SK-N-SH (cell line): ENCODE measurements at regions of chr6 and their contacts with region 1.

Region 1: GRCh38 chr6:151765444-151765886 is 42.0 kb upstream of the ESR1 start:
- DNase-seq: peak; percentile 61
- H3K4me3 ChIP-seq: peak overlapping the region in 1 of 2 experiments; percentile 14; a peak in 1 of 4 replicates
- H3K27ac ChIP-seq: no peak overlapping the region
- H3K4me1 ChIP-seq: no peaks in the 10 kb centered on the region; a peak in 2 of 4 replicates
- H3K27me3 ChIP-seq: no peaks in the 10 kb centered on the region
- CTCF ChIP-seq: peak; percentile 76
- EP300 ChIP-seq: no peak
- RAD21 ChIP-seq: peak; percentile 73

Region 2: DNA sequence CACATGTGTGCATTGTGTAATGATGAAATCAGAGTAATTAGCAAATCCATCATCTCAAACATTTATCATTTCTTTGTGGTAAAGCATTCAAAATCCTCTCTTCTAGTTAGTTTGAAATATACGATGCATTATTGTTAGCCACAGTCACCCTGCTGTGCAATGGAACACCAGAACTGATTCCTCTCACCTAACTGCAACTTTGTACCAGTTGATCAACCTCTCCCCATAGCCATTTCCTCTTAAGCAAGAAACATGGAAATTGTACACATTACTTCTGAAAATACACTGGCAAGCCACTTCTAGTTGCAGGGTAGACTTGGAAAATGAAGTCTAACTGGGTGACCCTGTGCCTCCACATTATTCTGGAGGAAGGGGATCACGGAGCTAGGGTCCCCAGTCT is 16.1 kb before region 1 on chr6:
- CTCF ChIA-PET with region 1: interaction called, 13 read pairs
- POLR2A ChIA-PET with region 1: no interaction called
- DNase-seq: no peak
- H3K4me3 ChIP-seq: no peak overlapping the region
- H3K27ac ChIP-seq: no peak overlapping the region
- H3K4me1 ChIP-seq: no peaks in the 10 kb centered on the region
- H3K27me3 ChIP-seq: no peaks in the 10 kb centered on the region
- CTCF ChIP-seq: no peak
- EP300 ChIP-seq: no peak
- RAD21 ChIP-seq: no peak

Region 3: DNA sequence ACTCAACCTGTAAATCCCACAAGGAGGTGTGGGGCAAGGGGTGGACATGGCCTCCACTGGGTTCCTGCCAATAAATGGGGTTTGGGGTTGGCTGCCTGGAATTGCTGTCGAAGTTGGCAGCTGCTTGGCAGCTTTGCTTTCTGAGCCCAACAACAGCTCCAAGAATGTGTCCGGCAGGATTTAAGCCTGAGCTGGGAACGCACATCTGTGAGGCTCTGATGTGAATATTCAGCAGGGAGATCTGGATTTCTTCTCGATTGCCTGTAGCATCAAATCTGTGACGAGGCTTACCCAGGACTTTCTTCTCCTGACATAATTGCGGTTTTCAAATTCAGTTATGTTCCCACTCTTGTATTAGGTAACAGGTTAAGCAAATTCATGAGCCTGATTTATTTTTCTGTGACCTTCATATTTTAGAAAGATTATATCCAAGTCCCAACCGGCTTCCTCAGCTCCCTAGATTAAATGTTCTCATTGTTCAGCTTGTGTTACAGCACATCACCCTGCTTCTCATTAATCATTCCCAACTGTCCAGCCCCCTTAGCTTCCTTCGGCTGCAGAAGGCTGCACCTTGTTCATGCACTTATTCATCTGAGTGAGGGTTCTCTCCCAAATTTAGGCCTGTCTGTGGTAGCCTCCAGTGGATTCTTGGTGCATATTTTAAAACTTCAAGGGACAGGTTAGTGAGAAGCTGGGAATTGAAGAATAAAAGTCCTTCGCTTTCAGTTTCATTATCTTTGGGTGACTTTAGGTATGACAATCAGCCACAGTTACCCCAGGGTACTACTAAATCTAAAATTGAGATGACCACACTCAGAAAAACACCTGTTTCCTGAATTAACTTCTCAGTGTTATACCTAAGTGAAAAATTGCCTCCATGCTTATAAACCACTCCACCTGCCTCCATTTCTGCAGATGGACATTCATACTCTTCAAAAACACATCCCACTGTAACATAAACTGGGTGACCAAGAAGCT is 352.0 kb after region 1 on chr6:
- CTCF ChIA-PET with region 1: interaction called, 69 read pairs
- POLR2A ChIA-PET with region 1: no interaction called
- DNase-seq: no peak
- H3K4me3 ChIP-seq: no peak overlapping the region
- H3K27ac ChIP-seq: no peak overlapping the region
- H3K4me1 ChIP-seq: peaks cover 0 to 9% of the 10 kb centered on the region in 2 experiments; a peak in 1 of 4 replicates
- H3K27me3 ChIP-seq: no peaks in the 10 kb centered on the region
- CTCF ChIP-seq: no peak
- EP300 ChIP-seq: no peak
- RAD21 ChIP-seq: no peak

Region 4: GRCh38 chr6:152267967-152268845 is 502.7 kb after region 1 on chr6:
- CTCF ChIA-PET with region 1: interaction called, 17 read pairs
- POLR2A ChIA-PET with region 1: no interaction called
- DNase-seq: peak; percentile 43
- H3K4me3 ChIP-seq: peak overlapping the region in 1 of 2 experiments; percentile 44; a peak in 1 of 4 replicates
- H3K27ac ChIP-seq: no peak overlapping the region
- H3K4me1 ChIP-seq: peaks cover 0 to 13% of the 10 kb centered on the region in 2 experiments; a peak in 1 of 4 replicates
- H3K27me3 ChIP-seq: no peaks in the 10 kb centered on the region
- CTCF ChIP-seq: peak; percentile 72
- EP300 ChIP-seq: no peak
- RAD21 ChIP-seq: peak; percentile 77